Body of pancreas (tissue), 4 donors: ENCODE measurements at regions of chr22 and their contacts with region 1.

Region 1: DNA sequence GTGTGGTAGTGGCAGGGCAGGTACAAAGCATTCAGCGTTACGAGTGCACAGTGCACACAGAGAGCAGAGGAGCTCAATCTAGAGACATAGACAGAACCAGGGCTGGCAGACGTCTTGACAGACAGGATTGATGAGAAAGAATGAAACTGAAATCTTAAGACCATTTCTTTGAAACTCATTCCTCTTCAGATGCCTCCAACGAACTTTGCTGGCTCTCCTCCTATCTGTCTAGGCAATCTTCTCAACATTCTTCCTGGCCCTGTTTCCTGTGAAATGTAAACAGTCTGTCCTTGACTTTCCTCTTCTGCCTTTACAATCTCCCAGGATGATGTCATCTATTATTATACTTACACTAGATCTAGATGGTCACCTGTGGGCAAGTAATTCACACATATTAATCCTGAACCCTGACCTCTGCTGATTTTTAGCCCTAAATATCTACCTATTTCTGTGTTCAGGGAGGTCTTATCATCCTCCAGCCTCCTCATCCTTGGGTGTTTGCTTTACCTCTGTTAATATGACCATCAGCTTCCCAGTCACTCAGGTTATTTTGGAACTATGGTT is 119.5 kb downstream of the ENTHD1 start:
- DNase-seq: no peak
- ATAC-seq: no peak
- H3K4me3 ChIP-seq: no peak overlapping the region
- H3K27ac ChIP-seq: no peak overlapping the region
- H3K4me1 ChIP-seq: no peaks in the 10 kb centered on the region
- H3K27me3 ChIP-seq: no peaks in the 10 kb centered on the region
- CTCF ChIP-seq: no peak
- POLR2A ChIP-seq: no peak

Region 2: GRCh38 chr22:39820256-39820655 is 46.2 kb after region 1 on chr22:
- intact Hi-C with region 1: loop called (anchors 5 kb)
- DNase-seq: no peak
- ATAC-seq: no peak
- H3K4me3 ChIP-seq: no peak overlapping the region
- H3K27ac ChIP-seq: no peak overlapping the region
- H3K4me1 ChIP-seq: no peaks in the 10 kb centered on the region
- H3K27me3 ChIP-seq: no peaks in the 10 kb centered on the region
- CTCF ChIP-seq: no peak
- POLR2A ChIP-seq: no peak